ENCODE measurements at regions of chr7 and their contacts with region 1.

Region 1: DNA sequence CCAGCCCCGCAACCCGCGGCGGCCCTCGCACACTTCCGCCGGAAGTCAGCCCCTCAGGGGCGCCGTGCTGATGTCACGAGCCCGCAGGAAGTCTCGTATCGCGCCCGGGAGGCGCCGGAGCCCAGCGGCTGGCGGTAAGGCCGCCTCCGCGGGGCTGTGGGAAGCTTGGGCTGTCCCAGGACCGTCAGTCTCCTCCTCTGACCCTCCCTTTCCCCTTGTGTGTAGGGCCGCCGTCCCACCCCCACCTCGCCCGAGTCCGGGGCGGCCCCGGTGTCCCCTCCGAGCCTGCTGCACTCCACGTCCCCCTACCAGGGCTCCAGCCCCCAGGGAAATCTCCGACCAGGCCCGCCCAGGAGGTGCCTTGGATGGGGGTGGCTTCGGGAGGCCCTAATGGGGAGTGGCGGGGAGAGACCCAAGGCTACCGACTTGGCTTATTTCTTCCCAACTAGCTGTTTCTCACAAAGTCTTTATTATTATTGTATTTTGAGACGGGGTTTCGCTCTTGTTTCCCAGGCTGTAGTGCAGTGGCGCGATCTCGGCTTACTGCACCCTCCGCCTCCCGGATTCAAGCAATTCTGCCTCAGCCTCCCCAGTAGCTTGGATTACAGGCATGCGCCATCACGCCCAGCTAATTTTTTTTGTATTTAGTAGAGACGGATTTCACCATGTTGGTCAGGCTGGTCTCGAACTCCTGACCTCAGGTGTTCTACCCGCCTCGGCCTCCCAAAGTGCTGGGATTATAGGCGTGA is at the start of gene ZDHHC4:
- DNase-seq: peak; percentile 82
- H3K4me3 Mint-ChIP-seq: peak within 1 kb of the TSS; percentile 85
- H3K27ac Mint-ChIP-seq: peak within 1 kb of the TSS; percentile 89
- H3K4me1 Mint-ChIP-seq: no peaks in the 10 kb centered on the region
- H3K27me3 Mint-ChIP-seq: peaks cover 2% of the 10 kb centered on the region
- total RNA-seq, gene ZDHHC4: 21.0 and 24.6 TPM in 2 replicates

Region 2: GRCh38 chr7:6516387-6516983 is 61.1 kb before region 1 on chr7:
- intact Hi-C with region 1: loop called (anchors 2 kb)
- DNase-seq: peak; percentile 49
- H3K4me3 Mint-ChIP-seq: peak overlapping the region; percentile 67
- H3K27ac Mint-ChIP-seq: no peak overlapping the region
- H3K4me1 Mint-ChIP-seq: peaks cover 7% of the 10 kb centered on the region
- H3K27me3 Mint-ChIP-seq: peaks cover 6% of the 10 kb centered on the region

Region 3: GRCh38 chr7:6530626-6531491 is 46.7 kb before region 1 on chr7:
- intact Hi-C with region 1: loop called (anchors 5 kb)
- DNase-seq: no peak
- H3K4me3 Mint-ChIP-seq: peak overlapping the region; percentile 68
- H3K27ac Mint-ChIP-seq: no peak overlapping the region
- H3K4me1 Mint-ChIP-seq: peaks cover 7% of the 10 kb centered on the region
- H3K27me3 Mint-ChIP-seq: peaks cover 51% of the 10 kb centered on the region

Region 4: DNA sequence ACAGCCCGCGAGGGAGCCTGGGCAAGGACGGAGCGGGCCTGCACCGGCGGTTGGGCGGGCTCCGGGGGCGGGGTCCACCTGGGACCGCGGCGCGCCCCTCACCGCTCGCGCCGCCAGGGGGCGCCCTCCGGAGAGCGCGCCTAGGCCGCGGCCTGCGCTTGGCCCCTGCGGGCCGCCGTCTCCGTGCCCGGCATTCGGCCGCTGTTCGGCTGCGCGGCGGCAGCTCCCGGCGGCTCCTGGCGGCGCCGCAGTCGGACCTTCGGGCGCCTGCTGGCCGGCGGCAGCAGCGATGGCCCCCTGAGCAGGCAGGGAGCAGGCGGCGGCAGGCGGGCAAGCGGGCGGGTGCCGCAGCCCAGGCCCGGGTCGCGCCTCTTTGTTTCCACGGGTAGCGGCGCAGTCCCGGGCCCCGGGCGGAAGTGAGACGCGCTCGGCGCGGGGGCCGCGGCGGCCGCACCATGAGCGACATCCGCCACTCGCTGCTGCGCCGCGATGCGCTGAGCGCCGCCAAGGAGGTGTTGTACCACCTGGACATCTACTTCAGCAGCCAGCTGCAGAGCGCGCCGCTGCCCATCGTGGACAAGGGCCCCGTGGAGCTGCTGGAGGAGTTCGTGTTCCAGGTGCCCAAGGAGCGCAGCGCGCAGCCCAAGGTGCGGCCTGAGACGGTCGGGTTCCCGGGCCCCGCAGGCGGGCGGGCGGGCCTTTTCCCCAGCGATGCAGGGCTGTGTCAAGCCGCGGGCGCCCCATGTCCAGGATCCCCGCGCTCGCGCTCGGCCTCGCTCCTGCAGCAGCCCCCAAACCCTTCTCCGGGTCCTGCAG is 12.5 kb after region 1 on chr7 and contains the start of gene INTS15:
- intact Hi-C with region 1: loop called (anchors 1 kb)
- DNase-seq: peak; percentile 78
- H3K4me3 Mint-ChIP-seq: peak within 1 kb of the TSS; percentile 88
- H3K27ac Mint-ChIP-seq: peak within 1 kb of the TSS; percentile 85
- H3K4me1 Mint-ChIP-seq: peaks cover 8% of the 10 kb centered on the region
- H3K27me3 Mint-ChIP-seq: no peaks in the 10 kb centered on the region
- total RNA-seq, gene INTS15: 44.6 and 46.6 TPM in 2 replicates

Region 5: DNA sequence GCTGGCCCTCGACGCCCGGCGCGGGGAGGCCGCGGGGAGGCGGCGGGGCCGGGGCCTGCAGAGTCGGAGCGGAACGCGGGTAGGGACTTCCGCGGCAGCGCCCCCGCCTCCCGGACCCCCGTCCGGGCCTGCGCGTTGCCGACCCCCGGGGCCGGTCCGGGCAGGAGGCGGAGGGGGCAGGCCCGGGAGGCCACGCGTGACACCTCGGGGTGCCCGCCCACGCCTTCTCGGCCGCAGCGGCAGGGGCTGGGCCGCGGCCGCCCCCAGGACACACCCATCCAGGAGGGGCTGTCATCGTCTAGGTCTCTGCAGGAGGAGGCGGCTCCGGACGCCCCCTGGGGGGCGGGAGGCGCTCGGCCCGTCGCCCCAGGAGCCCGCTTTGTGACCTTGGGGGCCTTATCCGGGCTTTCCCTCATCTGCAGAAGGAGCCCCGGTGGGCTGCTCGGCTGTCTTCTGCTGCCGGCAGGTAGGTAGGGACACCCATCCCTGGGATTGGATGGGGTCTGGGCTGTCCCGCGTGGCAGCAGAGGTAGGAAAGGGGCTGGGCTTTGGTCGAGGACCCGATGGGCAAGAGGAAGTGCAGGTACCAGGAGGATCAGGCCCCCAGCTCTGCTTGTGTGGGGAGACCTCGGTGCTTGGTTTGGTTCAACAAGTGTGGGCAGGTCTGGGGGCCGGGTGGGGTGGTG is 60.1 kb after region 1 on chr7:
- intact Hi-C with region 1: loop called (anchors 10 kb)
- DNase-seq: peak; percentile 48
- H3K4me3 Mint-ChIP-seq: peak overlapping the region; percentile 84
- H3K27ac Mint-ChIP-seq: peak overlapping the region; percentile 87
- H3K4me1 Mint-ChIP-seq: peaks cover 19% of the 10 kb centered on the region
- H3K27me3 Mint-ChIP-seq: no peaks in the 10 kb centered on the region

Region 6: DNA sequence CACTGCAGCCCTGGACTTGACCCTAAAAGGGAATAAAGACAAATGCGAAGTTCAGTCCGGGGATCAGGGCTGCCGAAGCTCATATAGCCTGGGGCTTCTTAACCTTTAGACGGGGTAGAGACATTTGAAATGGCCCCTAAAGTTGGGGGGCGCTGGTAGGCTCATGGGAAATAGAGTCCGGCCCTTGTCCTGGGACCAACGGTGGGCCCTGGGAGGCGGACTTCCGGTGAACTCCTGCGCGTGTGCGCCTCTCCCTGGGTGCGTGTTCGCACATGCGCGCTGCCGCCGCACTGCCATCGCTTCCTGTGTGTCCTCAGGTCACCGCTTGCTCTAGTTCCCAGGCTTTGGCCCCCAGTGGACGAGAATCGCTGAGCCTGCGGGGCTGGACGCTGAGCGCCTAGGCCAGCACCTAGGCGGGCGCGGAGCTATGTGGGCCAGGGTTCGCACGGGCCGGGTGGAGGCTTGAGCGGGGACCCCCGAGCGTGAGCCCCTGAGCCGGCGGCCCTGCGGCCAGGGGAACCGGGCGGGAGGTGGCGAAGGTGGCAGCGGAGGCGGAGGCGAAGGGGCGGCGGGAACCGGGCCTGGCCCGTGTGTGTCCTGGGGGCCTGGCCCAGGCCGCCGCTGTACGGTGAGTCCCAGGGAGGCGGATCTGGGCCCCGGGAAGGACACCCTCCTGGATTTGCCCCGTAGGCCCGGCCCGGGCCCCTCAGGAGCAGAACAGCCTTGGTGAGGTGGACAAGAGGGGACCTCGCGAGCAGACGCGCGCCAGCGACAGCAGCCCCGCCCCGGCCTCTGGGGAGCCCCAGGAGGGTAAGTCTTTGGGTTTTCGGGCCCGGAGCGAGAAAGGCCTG is 152.2 kb after region 1 on chr7:
- intact Hi-C with region 1: loop called (anchors 5 kb)
- DNase-seq: peak; percentile 81
- H3K4me3 Mint-ChIP-seq: peak overlapping the region; percentile 93
- H3K27ac Mint-ChIP-seq: peak overlapping the region; percentile 80
- H3K4me1 Mint-ChIP-seq: peaks cover 27% of the 10 kb centered on the region
- H3K27me3 Mint-ChIP-seq: peaks cover 2% of the 10 kb centered on the region

Measured in activated T-helper 1 cell treated with anti-CD3 and anti-CD28 coated beads, Interleukin-12 subunit alpha, Interleukin-12 subunit beta, Interleukin-2, Interleukin-4 antibody, amounts not matched to agents 30 ng/mL and 10 ng/mL and 1 ng/mL, durations not matched to agents 14 hours and 24 hours and 36 hours (primary cell).